CD14-positive monocyte (primary cell): ENCODE measurements at regions of chr1 and their contacts with region 1.

Region 1: DNA sequence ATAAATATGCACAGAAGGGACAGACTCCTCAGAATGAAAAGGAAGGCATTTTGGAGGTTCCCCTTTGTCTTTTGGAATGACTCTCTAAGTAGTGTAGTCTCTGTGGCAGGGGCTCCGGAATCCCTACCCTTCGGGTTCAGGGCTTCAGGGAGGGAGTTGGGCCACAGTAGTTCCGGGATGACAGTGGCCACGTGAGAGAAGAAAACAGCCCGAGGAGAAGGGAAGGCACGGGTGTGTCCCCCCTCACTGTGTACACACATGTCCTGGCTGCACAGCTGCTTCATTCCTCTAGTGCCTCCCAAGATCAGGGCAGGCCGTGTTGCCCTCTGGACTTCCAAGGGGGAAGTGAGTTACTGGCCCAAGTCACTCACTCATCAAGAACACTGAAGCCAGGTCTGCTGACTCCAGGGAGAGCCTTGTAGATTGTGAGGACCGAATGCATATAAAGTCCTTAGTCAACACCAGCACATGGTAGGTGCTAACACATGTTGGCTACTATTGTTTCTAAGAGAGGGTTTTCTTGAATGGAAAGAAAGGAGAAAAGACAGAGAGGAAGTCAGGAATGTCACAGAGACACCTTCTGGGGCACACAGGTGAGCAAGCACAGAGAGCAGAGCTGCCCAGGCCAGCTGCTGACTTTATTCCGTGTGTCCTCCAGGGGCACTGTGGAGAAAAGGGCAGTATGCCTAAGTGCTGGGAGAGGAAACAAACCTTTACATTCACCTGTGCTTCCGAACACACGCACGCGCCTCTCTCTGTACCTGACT is 39.9 kb downstream of the LHX4 start:
- DNase-seq: peak in 2 of 3 donors; percentile 29 to 34
- H3K4me3 ChIP-seq: peak overlapping the region in 1 of 3 experiments; percentile 33
- H3K4me3 Mint-ChIP-seq: peak overlapping the region in 1 of 2 donors; percentile 63
- H3K27ac ChIP-seq: peak overlapping the region; percentile 2 to 69
- H3K27ac Mint-ChIP-seq: peak overlapping the region; percentile 47 to 90 (median 84)
- H3K4me1 ChIP-seq: peaks cover 26 to 33% of the 10 kb centered on the region in 2 donors
- H3K4me1 Mint-ChIP-seq: peaks cover 36% of the 10 kb centered on the region
- H3K27me3 ChIP-seq: no peaks in the 10 kb centered on the region
- H3K27me3 Mint-ChIP-seq: peaks cover 5 to 12% (median 6%) of the 10 kb centered on the region in 3 donors
- CTCF ChIP-seq: peak; percentile 19

Region 2: DNA sequence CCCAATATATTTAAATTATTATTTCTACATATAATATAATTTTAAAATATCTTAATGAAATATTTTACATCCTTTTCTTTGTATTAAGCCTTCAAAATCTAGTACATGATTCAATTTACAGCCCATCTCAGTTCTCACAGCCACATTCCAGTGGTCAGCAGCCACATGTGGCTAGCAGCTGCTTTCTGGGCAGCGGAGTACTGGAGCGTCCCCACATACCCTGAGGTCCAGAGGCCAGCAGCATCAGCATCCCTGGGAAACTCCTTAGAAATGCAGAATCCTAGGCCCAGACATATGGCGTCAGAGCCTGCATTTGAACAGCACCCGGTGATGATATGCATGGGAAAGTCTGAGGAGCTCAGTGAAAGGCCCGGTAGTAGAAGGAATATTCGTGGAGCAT is 48.5 kb before region 1 on chr1:
- intact Hi-C with region 1: no loop called
- DNase-seq: no peak
- H3K4me3 ChIP-seq: no peak overlapping the region
- H3K4me3 Mint-ChIP-seq: no peak overlapping the region
- H3K27ac ChIP-seq: no peak overlapping the region
- H3K27ac Mint-ChIP-seq: no peak overlapping the region
- H3K4me1 ChIP-seq: no peaks in the 10 kb centered on the region
- H3K4me1 Mint-ChIP-seq: no peaks in the 10 kb centered on the region
- H3K27me3 ChIP-seq: peaks cover 29 to 35% of the 10 kb centered on the region in 2 donors
- H3K27me3 Mint-ChIP-seq: peaks cover 36 to 53% (median 42%) of the 10 kb centered on the region in 3 donors
- CTCF ChIP-seq: no peak

Region 3: DNA sequence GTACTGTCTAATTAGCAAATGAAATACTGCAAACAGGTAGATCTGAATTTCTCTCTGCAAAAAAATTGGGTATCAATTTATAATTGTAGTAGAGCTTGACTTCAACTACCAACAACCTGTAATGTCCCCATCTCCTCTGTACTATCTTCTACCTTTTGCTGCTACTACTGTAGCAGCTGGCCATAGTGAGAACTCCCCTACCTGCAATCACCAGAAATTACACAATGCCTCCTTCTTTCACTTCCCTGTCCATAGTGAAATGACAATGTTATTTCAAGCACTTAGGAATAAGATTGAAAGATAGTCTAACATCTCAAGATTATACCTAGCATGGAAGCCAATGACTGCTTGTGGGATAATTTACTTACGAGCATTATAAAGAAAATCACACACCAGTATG is 132.1 kb after region 1 on chr1:
- intact Hi-C with region 1: loop called in 1 of 2 experiments (anchors 10 kb)
- DNase-seq: peak; percentile 39 to 79 (median 75)
- H3K4me3 ChIP-seq: peak overlapping the region in 1 of 3 experiments; percentile 33
- H3K4me3 Mint-ChIP-seq: peak overlapping the region in 1 of 2 donors; percentile 31
- H3K27ac ChIP-seq: peak overlapping the region; percentile 85 to 90
- H3K27ac Mint-ChIP-seq: peak overlapping the region; percentile 90 to 97 (median 94)
- H3K4me1 ChIP-seq: peaks cover 29 to 49% of the 10 kb centered on the region in 2 donors
- H3K4me1 Mint-ChIP-seq: peaks cover 35% of the 10 kb centered on the region
- H3K27me3 ChIP-seq: no peaks in the 10 kb centered on the region
- H3K27me3 Mint-ChIP-seq: no peaks in the 10 kb centered on the region
- CTCF ChIP-seq: no peak